ENCODE measurements at regions of chr5 and their contacts with region 1.

Region 1: DNA sequence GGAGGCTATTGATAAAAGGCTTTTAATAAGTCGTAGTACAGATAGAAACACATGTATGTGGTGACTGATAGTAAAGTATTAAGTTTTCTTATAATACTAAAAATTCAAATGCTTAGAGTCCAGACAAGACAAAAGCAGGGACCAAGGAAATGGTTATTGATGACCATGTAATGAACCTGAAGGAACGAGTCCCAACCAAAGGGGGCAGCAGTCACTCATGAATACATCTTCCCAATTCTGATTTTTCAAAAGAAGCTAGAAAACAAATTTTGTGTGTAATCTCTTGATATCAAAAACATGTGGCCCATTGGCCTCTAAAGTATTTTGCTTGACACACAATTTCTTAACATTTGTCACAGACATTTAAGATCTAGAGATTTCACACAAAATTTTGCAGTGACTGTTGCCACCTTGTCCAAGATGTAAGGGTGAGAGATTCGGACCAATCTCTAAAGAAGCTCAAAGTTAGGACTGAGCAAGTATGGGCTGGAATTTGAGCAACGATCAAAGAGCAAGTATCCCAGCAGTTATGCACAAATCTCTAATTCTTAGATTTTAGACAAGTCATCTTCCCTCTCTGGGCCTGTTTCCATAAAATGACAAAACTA is 66.8 kb downstream of the ARL15 start:
- DNase-seq: peak; percentile 51
- H3K4me3 Mint-ChIP-seq: no peak overlapping the region
- H3K27ac Mint-ChIP-seq: no peak overlapping the region
- H3K4me1 Mint-ChIP-seq: peaks cover 3% of the 10 kb centered on the region
- H3K27me3 Mint-ChIP-seq: no peaks in the 10 kb centered on the region

Region 2: DNA sequence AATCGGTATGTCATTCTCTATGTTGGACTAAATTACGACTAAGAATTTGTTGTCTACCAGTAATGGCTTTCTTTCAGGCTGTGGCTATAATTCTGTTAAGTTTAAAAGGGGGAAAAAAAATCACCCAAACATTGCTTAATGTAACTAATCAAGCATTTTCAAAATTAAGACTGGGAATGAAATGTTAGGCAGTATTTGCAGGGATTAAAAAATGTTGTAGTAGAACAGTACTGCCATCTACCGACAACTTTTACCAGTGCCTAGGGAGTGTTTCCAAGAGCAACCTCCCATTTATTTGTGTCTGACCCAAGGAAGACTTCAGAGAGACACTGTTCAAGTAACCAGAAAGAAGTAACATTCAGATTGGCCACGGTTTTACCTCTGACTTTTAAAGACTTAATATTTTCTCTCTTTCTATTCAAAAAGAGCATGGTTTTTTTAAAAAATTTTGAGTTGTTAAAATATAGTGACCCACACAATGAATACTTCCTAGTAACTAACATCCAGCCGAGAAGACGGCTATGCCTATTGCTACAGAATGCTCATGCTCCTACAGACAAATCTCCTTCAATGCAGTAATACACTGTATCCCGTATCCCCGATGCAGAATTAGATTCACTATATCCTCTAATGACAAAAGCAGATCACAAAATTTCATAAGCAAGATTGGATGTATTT is 25.6 kb before region 1 on chr5:
- CTCF ChIA-PET with region 1: no interaction called
- DNase-seq: no peak
- H3K4me3 Mint-ChIP-seq: no peak overlapping the region
- H3K27ac Mint-ChIP-seq: no peak overlapping the region
- H3K4me1 Mint-ChIP-seq: no peaks in the 10 kb centered on the region
- H3K27me3 Mint-ChIP-seq: no peaks in the 10 kb centered on the region

Region 3: DNA sequence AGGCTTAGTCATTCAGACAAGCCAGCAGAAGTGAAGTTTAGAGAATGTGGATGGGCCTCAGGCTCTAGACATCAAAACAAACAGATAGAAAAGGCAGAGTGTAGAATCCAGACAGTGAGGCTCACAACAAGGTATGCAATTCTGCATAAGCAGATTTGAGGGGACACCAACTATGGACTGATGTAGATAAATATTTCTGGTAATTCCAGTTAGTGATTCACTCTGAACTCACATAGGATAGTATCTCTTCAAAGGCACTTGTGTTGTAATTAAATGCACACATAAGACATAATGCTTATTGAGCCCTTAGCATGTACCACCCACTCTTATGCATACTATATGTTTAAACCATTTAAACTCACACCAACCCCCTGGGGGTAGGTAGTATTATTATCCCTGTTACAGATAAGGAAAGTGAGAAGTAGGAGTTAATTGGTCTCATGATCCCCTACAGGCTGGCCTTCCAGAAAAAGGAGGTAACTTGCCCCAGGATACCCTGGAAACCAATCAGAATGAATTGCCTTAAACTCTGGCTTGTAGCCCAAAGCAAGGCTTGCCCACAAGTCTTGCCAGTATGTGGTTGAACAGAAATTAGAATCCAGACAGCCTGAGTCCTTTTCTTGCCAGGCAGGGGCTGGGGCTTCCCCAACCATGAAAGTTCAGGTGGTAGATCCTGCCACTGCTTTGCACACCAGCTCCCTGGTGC is 172.5 kb after region 1 on chr5:
- CTCF ChIA-PET with region 1: interaction called, 15 read pairs
- DNase-seq: no peak
- H3K4me3 Mint-ChIP-seq: no peak overlapping the region
- H3K27ac Mint-ChIP-seq: no peak overlapping the region
- H3K4me1 Mint-ChIP-seq: no peaks in the 10 kb centered on the region
- H3K27me3 Mint-ChIP-seq: peaks cover 9% of the 10 kb centered on the region